GM23248 (cell line): ENCODE measurements at regions of chr4 and their contacts with region 1.

Region 1: GRCh38 chr4:122329876-122330565 is 48.8 kb upstream of the ADAD1 start:
- DNase-seq: peak; percentile 58
- H3K4me3 ChIP-seq: no peak overlapping the region
- H3K27ac ChIP-seq: peak overlapping the region; percentile 70
- H3K4me1 ChIP-seq: peaks cover 12% of the 10 kb centered on the region
- H3K27me3 ChIP-seq: no peaks in the 10 kb centered on the region

Region 2: DNA sequence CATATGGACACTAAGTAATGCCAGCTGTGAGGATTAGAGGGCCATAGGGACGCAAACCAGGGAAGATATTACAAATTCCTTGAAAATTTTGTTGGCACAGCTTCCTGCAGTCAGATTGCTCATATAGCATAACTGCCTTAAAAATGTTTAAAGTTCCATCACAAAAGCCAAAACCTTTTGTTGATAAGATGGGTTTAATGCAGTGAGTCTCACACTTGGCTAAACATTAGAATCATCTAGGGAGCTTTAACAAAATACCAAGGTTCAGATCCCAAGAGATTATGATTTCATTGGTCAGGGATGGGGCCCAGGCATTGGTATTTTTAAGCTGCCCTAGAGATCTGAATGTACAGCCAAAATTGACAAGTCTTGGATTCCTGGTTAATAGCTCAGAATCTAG is 1886.9 kb before region 1 on chr4:
- in situ Hi-C with region 1: no loop called
- DNase-seq: peak; percentile 57
- H3K4me3 ChIP-seq: no peak overlapping the region
- H3K27ac ChIP-seq: no peak overlapping the region
- H3K4me1 ChIP-seq: 0 out of 2 replicates have a peak, but pooled peaks cover 5% of the 10 kb centered on the region
- H3K27me3 ChIP-seq: no peaks in the 10 kb centered on the region

Region 3: DNA sequence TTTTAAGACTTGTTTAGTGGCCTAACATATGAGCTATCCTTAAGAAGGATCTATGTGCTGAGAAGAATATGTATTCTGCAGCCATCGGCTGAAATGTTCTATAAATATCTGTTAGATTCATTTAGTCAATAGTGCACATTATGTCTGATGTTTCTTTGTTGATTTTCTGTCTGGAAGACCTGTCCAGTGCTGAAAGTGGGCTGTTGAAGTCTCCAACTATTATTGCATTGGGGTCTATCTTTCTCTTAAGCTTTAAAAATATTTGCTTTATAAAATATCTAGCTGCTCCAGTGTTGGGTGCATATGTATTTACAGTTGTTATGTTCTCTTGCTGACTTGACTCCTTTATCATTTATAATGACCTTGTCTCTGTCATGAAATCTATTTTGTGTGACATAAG is 187.3 kb before region 1 on chr4:
- in situ Hi-C with region 1: no loop called
- DNase-seq: no peak
- H3K4me3 ChIP-seq: no peak overlapping the region
- H3K27ac ChIP-seq: no peak overlapping the region
- H3K4me1 ChIP-seq: no peaks in the 10 kb centered on the region
- H3K27me3 ChIP-seq: peaks cover 6% of the 10 kb centered on the region; the same call in 1 of the 2 replicates

Region 4: GRCh38 chr4:122577808-122578781 is 248.1 kb after region 1 on chr4:
- in situ Hi-C with region 1: loop called (anchors 10 kb)
- DNase-seq: peak; percentile 67
- H3K4me3 ChIP-seq: no peak overlapping the region
- H3K27ac ChIP-seq: no peak overlapping the region
- H3K4me1 ChIP-seq: peaks cover 7% of the 10 kb centered on the region
- H3K27me3 ChIP-seq: no peaks in the 10 kb centered on the region